Naive thymus-derived CD4-positive, alpha-beta T cell (primary cell): ENCODE measurements at regions of chr6 and their contacts with region 1.

Region 1: GRCh38 chr6:2542858-2543218 is 207.9 kb downstream of the MYLK4 start:
- DNase-seq: peak in 8 of 9 donors; percentile 20 to 64 (median 49)
- ATAC-seq: peak; percentile 87
- H3K4me3 ChIP-seq: peak overlapping the region; percentile 14
- H3K4me3 Mint-ChIP-seq: peak overlapping the region; percentile 18 to 73 (median 53)
- H3K27ac ChIP-seq: no peak overlapping the region
- H3K27ac Mint-ChIP-seq: peak overlapping the region in 3 of 9 donors; percentile 1 to 61 (median 15)
- H3K4me1 ChIP-seq: peaks cover 16 to 20% of the 10 kb centered on the region in 2 donors
- H3K4me1 Mint-ChIP-seq: peaks cover 17 to 35% (median 25%) of the 10 kb centered on the region in 7 donors
- H3K27me3 ChIP-seq: peaks cover 0 to 4% of the 10 kb centered on the region in 2 donors
- H3K27me3 Mint-ChIP-seq: peaks cover 57 to 77% (median 63%) of the 10 kb centered on the region in 5 donors

Region 2: GRCh38 chr6:2563635-2564034 is 20.8 kb after region 1 on chr6:
- CTCF ChIA-PET with region 1: no interaction called
- POLR2A ChIA-PET with region 1: no interaction called
- intact Hi-C with region 1: loop called in 1 of 2 experiments (anchors 2 kb)
- DNase-seq: peak in 1 of 9 donors; percentile 30
- ATAC-seq: no peak
- H3K4me3 ChIP-seq: no peak overlapping the region
- H3K4me3 Mint-ChIP-seq: peak overlapping the region in 1 of 10 donors; percentile 41
- H3K27ac ChIP-seq: no peak overlapping the region
- H3K27ac Mint-ChIP-seq: no peak overlapping the region
- H3K4me1 ChIP-seq: peaks cover 0 to 3% of the 10 kb centered on the region in 2 donors
- H3K4me1 Mint-ChIP-seq: peaks cover 0 to 16% (median 8%) of the 10 kb centered on the region in 7 donors
- H3K27me3 ChIP-seq: no peaks in the 10 kb centered on the region
- H3K27me3 Mint-ChIP-seq: peaks cover 0 to 75% (median 10%) of the 10 kb centered on the region in 5 donors